ENCODE measurements at regions of chr18 and their contacts with region 1.

Region 1: GRCh38 chr18:42053188-42053781 is 98.3 kb downstream of the PIK3C3 start:
- DNase-seq: no peak
- H3K4me3 ChIP-seq: no peak overlapping the region
- H3K27ac ChIP-seq: no peak overlapping the region
- H3K27me3 ChIP-seq: no peaks in the 10 kb centered on the region
- CTCF ChIP-seq: peak; percentile 88

Region 2: GRCh38 chr18:42011053-42011452 is 42.2 kb before region 1 on chr18:
- CTCF ChIA-PET with region 1: interaction called, 13 read pairs
- POLR2A ChIA-PET with region 1: no interaction called
- DNase-seq: no peak
- H3K4me3 ChIP-seq: no peak overlapping the region
- H3K27ac ChIP-seq: no peak overlapping the region
- H3K27me3 ChIP-seq: no peaks in the 10 kb centered on the region
- CTCF ChIP-seq: no peak

Region 3: GRCh38 chr18:42028247-42028832 is 24.9 kb before region 1 on chr18:
- CTCF ChIA-PET with region 1: interaction called, 83 read pairs
- POLR2A ChIA-PET with region 1: no interaction called
- DNase-seq: no peak
- H3K4me3 ChIP-seq: no peak overlapping the region
- H3K27ac ChIP-seq: no peak overlapping the region
- H3K27me3 ChIP-seq: no peaks in the 10 kb centered on the region
- CTCF ChIP-seq: peak; percentile 93

Region 4: DNA sequence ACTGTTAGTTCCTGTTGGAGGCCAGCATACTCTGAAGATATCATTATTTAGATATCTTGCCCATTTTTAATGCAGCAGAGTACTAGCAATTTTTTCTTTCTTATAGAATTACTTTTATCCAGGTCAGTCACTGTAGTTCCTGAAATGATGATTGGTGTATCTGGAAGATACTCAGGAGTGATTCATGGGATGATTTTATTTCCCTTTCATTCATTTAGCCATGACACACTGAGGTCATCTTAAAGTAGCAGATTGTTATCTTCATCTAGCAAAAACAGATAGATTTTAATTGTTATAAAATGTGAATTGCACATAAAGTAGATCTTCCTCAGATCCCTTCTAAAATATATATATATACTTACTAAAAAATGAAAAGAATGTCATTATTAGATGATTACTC is 10.8 kb after region 1 on chr18:
- CTCF ChIA-PET with region 1: interaction called, 181 read pairs
- POLR2A ChIA-PET with region 1: no interaction called
- DNase-seq: no peak
- H3K4me3 ChIP-seq: no peak overlapping the region
- H3K27ac ChIP-seq: no peak overlapping the region
- H3K27me3 ChIP-seq: no peaks in the 10 kb centered on the region
- CTCF ChIP-seq: no peak

Region 5: DNA sequence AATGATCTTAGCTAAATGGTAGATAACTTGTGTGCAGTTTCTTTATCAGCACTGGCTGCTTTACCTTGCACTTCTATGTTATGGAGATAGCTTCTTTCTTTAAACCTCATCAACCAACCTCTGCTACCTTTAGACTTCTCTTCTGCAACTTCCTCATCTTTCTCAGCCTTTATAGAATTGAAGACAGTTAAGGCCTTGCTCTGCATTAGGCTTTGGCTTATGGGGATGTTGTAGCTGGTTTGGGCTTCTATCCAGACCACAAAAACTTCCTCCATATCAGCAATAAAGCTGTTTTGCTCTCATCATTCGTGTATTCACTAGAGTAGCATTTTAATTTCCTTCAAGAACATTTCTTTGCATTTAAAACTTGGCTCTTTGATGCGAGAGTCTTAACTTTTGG is 25.4 kb after region 1 on chr18:
- CTCF ChIA-PET with region 1: interaction called, 181 read pairs
- POLR2A ChIA-PET with region 1: no interaction called
- DNase-seq: peak; percentile 2
- H3K4me3 ChIP-seq: no peak overlapping the region
- H3K27ac ChIP-seq: no peak overlapping the region
- H3K27me3 ChIP-seq: no peaks in the 10 kb centered on the region
- CTCF ChIP-seq: no peak

Region 6: GRCh38 chr18:42092848-42093247 is 39.6 kb after region 1 on chr18:
- CTCF ChIA-PET with region 1: interaction called, 10 read pairs
- POLR2A ChIA-PET with region 1: interaction called, 3 read pairs
- DNase-seq: no peak
- H3K4me3 ChIP-seq: no peak overlapping the region
- H3K27ac ChIP-seq: no peak overlapping the region
- H3K27me3 ChIP-seq: no peaks in the 10 kb centered on the region
- CTCF ChIP-seq: no peak

Region 7: GRCh38 chr18:43271593-43272432 is 1218.5 kb after region 1 on chr18:
- CTCF ChIA-PET with region 1: interaction called, 42 read pairs
- POLR2A ChIA-PET with region 1: no interaction called
- DNase-seq: peak; percentile 6
- H3K4me3 ChIP-seq: no peak overlapping the region
- H3K27ac ChIP-seq: no peak overlapping the region
- H3K27me3 ChIP-seq: no peaks in the 10 kb centered on the region
- CTCF ChIP-seq: peak; percentile 78